Transverse colon (tissue), 4 donors: ENCODE measurements at regions of chr18 and their contacts with region 1.

Region 1: DNA sequence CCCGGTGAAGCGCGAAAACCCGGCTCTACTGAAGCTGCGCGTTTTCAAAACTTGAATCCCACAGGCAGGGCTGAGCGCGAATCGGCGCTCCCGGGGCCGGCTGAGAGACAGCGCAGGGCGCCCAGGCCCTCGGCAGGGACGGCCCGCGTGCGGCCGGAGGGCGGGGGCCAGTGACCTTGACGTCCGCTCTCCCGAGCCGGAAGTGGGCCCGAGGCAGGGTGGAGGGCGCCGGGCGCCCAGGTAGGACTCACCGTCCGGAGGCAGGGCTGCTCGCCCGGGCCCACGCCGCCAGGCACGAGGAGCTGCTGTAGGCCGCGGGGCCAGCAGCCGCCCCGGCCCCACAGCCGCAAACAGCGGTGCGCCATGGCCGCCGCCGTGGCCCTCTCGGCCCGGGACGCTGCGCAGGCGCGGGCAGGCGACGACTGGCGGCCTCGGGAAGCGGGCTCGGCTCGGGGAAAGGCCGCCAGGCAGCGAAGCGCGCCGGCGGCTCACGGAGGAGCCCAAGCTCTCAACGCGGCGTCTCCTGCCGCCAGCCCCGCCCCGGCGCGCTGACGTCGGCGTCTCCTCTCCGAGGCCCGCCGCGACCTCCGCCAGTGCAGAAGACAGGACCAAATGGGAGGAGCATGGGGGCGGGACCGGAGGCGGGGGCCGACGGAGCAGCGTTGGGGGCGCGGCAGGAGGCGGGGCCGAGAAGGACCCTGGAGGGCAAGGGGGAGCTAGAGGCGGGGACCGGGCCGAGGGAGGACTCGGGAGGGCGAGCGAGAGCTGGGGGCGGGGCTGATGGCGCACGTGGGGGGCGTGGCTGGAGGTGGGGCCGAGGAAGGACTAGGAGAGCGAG is at the start of gene AFG3L2:
- DNase-seq: peak; percentile 100
- H3K4me3 ChIP-seq: peak within 1 kb of the TSS; percentile 74 to 87 (median 80)
- H3K27ac ChIP-seq: peak within 1 kb of the TSS; percentile 100
- H3K4me1 ChIP-seq: peaks cover 30 to 48% (median 41%) of the 10 kb centered on the region in 4 donors
- H3K27me3 ChIP-seq: no peaks in the 10 kb centered on the region
- CTCF ChIP-seq: no peak
- EP300 ChIP-seq: no peak
- POLR2A ChIP-seq: peak; percentile 74
- total RNA-seq, gene AFG3L2: 74.1 to 95.6 (median 92.6) TPM

Region 2: GRCh38 chr18:12947355-12948041 is 570.6 kb after region 1 on chr18 and contains the start of gene SEH1L:
- in situ Hi-C with region 1: loop called (anchors 25 kb)
- intact Hi-C with region 1: no loop called
- DNase-seq: peak; percentile 100
- H3K4me3 ChIP-seq: peak within 1 kb of the TSS; percentile 29 to 80 (median 52)
- H3K27ac ChIP-seq: peak within 1 kb of the TSS; percentile 94 to 98 (median 97)
- H3K4me1 ChIP-seq: peaks cover 0 to 34% (median 13%) of the 10 kb centered on the region in 4 donors
- H3K27me3 ChIP-seq: no peaks in the 10 kb centered on the region
- CTCF ChIP-seq: no peak
- EP300 ChIP-seq: no peak
- POLR2A ChIP-seq: peak; percentile 66
- total RNA-seq, gene SEH1L: 9.4 to 29.1 (median 18.2) TPM